ENCODE measurements at regions of chr2 and their contacts with region 1.

Region 1: DNA sequence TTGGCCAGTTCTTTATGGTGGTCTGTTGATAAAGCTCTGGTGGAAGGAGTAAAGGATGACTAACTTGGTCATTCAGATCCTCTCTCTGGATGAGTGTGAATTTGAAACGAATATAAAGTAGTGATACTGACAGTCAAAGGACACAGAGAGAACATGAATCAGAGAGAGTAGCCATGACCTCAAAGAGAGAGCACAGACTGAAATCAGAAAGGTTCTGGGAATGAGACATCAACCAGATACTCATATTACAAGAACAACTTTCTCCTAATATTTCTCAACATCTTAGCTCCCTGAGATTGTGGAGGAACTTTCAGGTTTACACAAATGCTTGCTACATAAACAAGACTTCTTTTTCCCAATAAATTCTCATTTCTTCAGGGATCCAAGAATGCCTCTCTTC is 849.1 kb upstream of the CHAC2 start:
- DNase-seq: no peak

Region 2: GRCh38 chr2:53403792-53404413 is 485.4 kb after region 1 on chr2:
- intact Hi-C with region 1: loop called in 1 of 2 experiments (anchors 5 kb)
- DNase-seq: no peak

Measured in posterior vena cava (tissue), 2 donors.